ENCODE measurements at regions of chr7 and their contacts with region 1.

Region 1: GRCh38 chr7:157386979-157387800 is 50.4 kb downstream of the DNAJB6 start:
- DNase-seq: peak; percentile 97
- H3K4me3 Mint-ChIP-seq: no peak overlapping the region
- H3K27ac Mint-ChIP-seq: peak overlapping the region; percentile 38
- H3K4me1 Mint-ChIP-seq: peaks cover 34% of the 10 kb centered on the region
- H3K27me3 Mint-ChIP-seq: no peaks in the 10 kb centered on the region

Region 2: GRCh38 chr7:157004050-157004838 is 382.9 kb before region 1 on chr7:
- CTCF ChIA-PET with region 1: no interaction called
- intact Hi-C with region 1: loop called (anchors 5 kb)
- DNase-seq: no peak
- H3K4me3 Mint-ChIP-seq: no peak overlapping the region
- H3K27ac Mint-ChIP-seq: no peak overlapping the region
- H3K4me1 Mint-ChIP-seq: peaks cover 28% of the 10 kb centered on the region
- H3K27me3 Mint-ChIP-seq: peaks cover 74% of the 10 kb centered on the region

Region 3: DNA sequence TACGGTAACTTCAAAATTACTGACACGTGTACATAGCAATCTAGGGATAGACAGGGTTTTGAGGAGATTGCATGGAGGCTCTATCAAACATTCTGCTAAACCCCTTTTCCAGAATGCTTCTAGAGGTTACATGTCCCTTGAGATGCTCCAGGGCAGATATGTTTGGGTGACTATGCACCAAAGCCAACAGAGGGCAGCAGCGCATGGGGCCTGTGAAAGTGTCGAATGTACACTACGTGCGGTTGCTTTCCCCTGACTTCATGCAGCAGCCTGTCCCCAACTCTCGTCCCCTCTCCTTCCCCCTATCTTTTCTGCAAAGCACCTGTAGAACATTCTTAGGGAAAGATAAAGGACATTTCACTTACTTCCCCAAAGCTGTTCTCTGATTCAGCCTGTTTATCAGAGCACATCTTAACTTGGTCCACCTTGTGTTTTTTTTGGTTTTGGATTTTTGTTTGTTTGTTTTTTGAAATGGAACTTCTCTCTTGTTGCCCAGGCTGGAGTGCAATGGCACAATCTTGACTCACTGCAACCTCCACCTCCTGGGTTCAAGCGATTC is 158.2 kb before region 1 on chr7:
- CTCF ChIA-PET with region 1: interaction called, 5 read pairs
- intact Hi-C with region 1: loop called (anchors 1 kb)
- DNase-seq: peak; percentile 39
- H3K4me3 Mint-ChIP-seq: no peak overlapping the region
- H3K27ac Mint-ChIP-seq: no peak overlapping the region
- H3K4me1 Mint-ChIP-seq: no peaks in the 10 kb centered on the region
- H3K27me3 Mint-ChIP-seq: no peaks in the 10 kb centered on the region

Region 4: GRCh38 chr7:157299613-157300368 is 87.4 kb before region 1 on chr7:
- CTCF ChIA-PET with region 1: interaction called, 6 read pairs
- intact Hi-C with region 1: loop called (anchors 1 kb)
- DNase-seq: no peak
- H3K4me3 Mint-ChIP-seq: no peak overlapping the region
- H3K27ac Mint-ChIP-seq: no peak overlapping the region
- H3K4me1 Mint-ChIP-seq: peaks cover 32% of the 10 kb centered on the region
- H3K27me3 Mint-ChIP-seq: no peaks in the 10 kb centered on the region